Colonic mucosa (tissue), 4 donors: ENCODE measurements at regions of chr1 and their contacts with region 1.

Region 1: GRCh38 chr1:175152037-175152652 is 40.4 kb downstream of the KIAA0040 start:
- DNase-seq: peak; percentile 62
- H3K4me3 ChIP-seq: no peak overlapping the region
- H3K27ac ChIP-seq: no peak overlapping the region
- H3K4me1 ChIP-seq: no peaks in the 10 kb centered on the region
- H3K27me3 ChIP-seq: no peaks in the 10 kb centered on the region
- CTCF ChIP-seq: peak; percentile 82

Region 2: GRCh38 chr1:174174461-174175329 is 977.5 kb before region 1 on chr1:
- intact Hi-C with region 1: no loop called
- DNase-seq: no peak
- H3K4me3 ChIP-seq: no peak overlapping the region
- H3K27ac ChIP-seq: no peak overlapping the region
- H3K4me1 ChIP-seq: no peaks in the 10 kb centered on the region
- H3K27me3 ChIP-seq: no peaks in the 10 kb centered on the region
- CTCF ChIP-seq: no peak

Region 3: GRCh38 chr1:175221666-175222175 is 69.6 kb after region 1 on chr1:
- intact Hi-C with region 1: loop called (anchors 2 kb)
- DNase-seq: peak; percentile 38
- H3K4me3 ChIP-seq: no peak overlapping the region
- H3K27ac ChIP-seq: no peak overlapping the region
- H3K4me1 ChIP-seq: peaks cover 4% of the 10 kb centered on the region
- H3K27me3 ChIP-seq: no peaks in the 10 kb centered on the region
- CTCF ChIP-seq: no peak

Region 4: GRCh38 chr1:175319418-175320230 is 167.5 kb after region 1 on chr1:
- intact Hi-C with region 1: loop called (anchors 2 kb)
- DNase-seq: peak; percentile 74
- H3K4me3 ChIP-seq: no peak overlapping the region
- H3K27ac ChIP-seq: no peak overlapping the region
- H3K4me1 ChIP-seq: no peaks in the 10 kb centered on the region
- H3K27me3 ChIP-seq: no peaks in the 10 kb centered on the region
- CTCF ChIP-seq: peak; percentile 71

Region 5: GRCh38 chr1:175511496-175511895 is 359.4 kb after region 1 on chr1:
- intact Hi-C with region 1: no loop called
- DNase-seq: no peak
- H3K4me3 ChIP-seq: no peak overlapping the region
- H3K27ac ChIP-seq: no peak overlapping the region
- H3K4me1 ChIP-seq: no peaks in the 10 kb centered on the region
- H3K27me3 ChIP-seq: no peaks in the 10 kb centered on the region
- CTCF ChIP-seq: no peak